ENCODE measurements at regions of chr10 and their contacts with region 1.

Region 1: GRCh38 chr10:117320050-117320665 is 55.1 kb downstream of the PDZD8 start:
- DNase-seq: peak; percentile 37
- H3K4me3 ChIP-seq: no peak overlapping the region
- H3K27ac ChIP-seq: no peak overlapping the region
- H3K4me1 ChIP-seq: no peaks in the 10 kb centered on the region
- H3K27me3 ChIP-seq: no peaks in the 10 kb centered on the region
- CTCF ChIP-seq: peak; percentile 32 to 39
- POLR2A ChIP-seq: no peak

Region 2: DNA sequence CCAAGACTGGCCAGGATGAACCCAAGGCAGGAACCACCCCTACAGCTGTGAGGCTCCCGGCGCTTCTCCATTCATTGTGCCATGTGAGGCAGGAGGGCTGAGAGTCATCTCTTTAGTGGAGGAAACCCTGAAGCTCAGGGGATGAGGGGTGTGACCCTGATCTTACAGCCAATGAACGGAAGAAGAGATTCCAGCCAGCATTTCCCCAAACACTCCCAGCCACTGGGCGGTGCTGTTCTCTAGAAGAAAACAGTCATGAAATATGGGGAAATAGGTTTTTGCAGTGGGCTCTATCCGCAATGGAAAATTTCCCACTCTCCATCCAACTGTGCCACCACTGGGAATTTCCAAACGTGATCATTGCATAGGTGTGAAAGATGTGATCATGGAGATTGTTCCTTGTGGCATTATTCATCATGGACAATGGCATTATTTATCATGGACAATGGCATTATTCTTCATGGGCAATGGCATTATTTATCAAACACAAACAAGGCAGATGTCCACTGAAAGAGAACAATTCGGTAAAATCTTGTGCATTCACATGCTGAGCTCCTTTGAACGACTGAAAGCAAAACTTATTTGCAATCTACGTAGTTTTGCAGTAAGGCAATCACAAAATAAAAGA is 93.2 kb before region 1 on chr10:
- CTCF ChIA-PET with region 1: interaction called, 17 read pairs
- POLR2A ChIA-PET with region 1: no interaction called
- dilution Hi-C with region 1: no loop called
- intact Hi-C with region 1: no loop called
- DNase-seq: peak; percentile 18
- H3K4me3 ChIP-seq: no peak overlapping the region
- H3K27ac ChIP-seq: no peak overlapping the region
- H3K4me1 ChIP-seq: no peaks in the 10 kb centered on the region
- H3K27me3 ChIP-seq: no peaks in the 10 kb centered on the region
- CTCF ChIP-seq: peak; percentile 34 to 41
- POLR2A ChIP-seq: no peak

Region 3: GRCh38 chr10:117334066-117334465 is 13.9 kb after region 1 on chr10:
- CTCF ChIA-PET with region 1: interaction called, 13 read pairs
- POLR2A ChIA-PET with region 1: no interaction called
- dilution Hi-C with region 1: no loop called
- intact Hi-C with region 1: no loop called
- DNase-seq: no peak
- H3K4me3 ChIP-seq: no peak overlapping the region
- H3K27ac ChIP-seq: no peak overlapping the region
- H3K4me1 ChIP-seq: no peaks in the 10 kb centered on the region
- H3K27me3 ChIP-seq: no peaks in the 10 kb centered on the region
- CTCF ChIP-seq: no peak
- POLR2A ChIP-seq: no peak

Region 4: GRCh38 chr10:117342641-117343040 is 22.5 kb after region 1 on chr10:
- CTCF ChIA-PET with region 1: interaction called, 13 read pairs
- POLR2A ChIA-PET with region 1: interaction called, 6 read pairs
- dilution Hi-C with region 1: no loop called
- intact Hi-C with region 1: no loop called
- DNase-seq: no peak
- H3K4me3 ChIP-seq: no peak overlapping the region
- H3K27ac ChIP-seq: no peak overlapping the region
- H3K4me1 ChIP-seq: no peaks in the 10 kb centered on the region
- H3K27me3 ChIP-seq: no peaks in the 10 kb centered on the region
- CTCF ChIP-seq: no peak
- POLR2A ChIP-seq: no peak

Region 5: DNA sequence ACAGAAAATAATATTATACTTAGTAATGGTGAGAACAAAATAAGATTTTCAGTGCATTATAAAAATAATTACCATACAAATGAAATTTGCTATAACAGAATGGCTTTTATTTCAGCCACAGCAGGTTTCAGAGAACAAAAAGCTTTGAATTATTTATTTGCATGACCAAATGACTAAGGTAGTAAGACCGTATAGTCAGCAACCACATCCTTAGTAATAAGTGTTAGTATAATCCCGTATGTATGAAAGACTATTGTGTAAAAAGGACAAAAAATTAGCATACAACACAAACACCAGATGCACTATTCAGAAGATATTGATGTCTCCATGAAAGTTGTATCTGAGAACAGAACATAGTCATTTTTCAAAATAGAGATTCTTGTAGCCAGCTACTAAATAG is 42.9 kb after region 1 on chr10:
- CTCF ChIA-PET with region 1: interaction called, 15 read pairs
- POLR2A ChIA-PET with region 1: no interaction called
- dilution Hi-C with region 1: no loop called
- intact Hi-C with region 1: no loop called
- DNase-seq: no peak
- H3K4me3 ChIP-seq: no peak overlapping the region
- H3K27ac ChIP-seq: no peak overlapping the region
- H3K4me1 ChIP-seq: peaks cover 37% of the 10 kb centered on the region
- H3K27me3 ChIP-seq: no peaks in the 10 kb centered on the region
- CTCF ChIP-seq: no peak
- POLR2A ChIP-seq: no peak

Region 6: DNA sequence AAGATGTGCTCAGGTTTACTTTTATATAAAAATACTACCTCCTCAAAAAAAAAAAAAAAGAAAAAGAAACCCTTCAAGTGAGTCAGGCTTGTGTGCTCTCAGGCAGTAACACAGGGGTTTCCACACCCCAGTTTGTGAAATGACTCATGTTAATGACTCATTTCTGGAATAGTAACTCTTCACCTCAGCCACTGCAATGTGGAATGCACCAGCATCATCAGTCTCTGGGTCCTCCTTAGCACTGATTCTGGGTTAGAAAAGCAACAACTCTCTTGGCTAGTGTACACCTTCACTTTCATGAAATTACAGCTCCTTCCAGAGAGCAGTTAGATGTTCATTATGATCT is 333.0 kb after region 1 on chr10:
- CTCF ChIA-PET with region 1: no interaction called
- POLR2A ChIA-PET with region 1: no interaction called
- dilution Hi-C with region 1: no loop called
- intact Hi-C with region 1: no loop called
- DNase-seq: peak; percentile 18
- H3K4me3 ChIP-seq: no peak overlapping the region
- H3K27ac ChIP-seq: no peak overlapping the region
- H3K4me1 ChIP-seq: no peaks in the 10 kb centered on the region
- H3K27me3 ChIP-seq: no peaks in the 10 kb centered on the region
- CTCF ChIP-seq: no peak
- POLR2A ChIP-seq: no peak

Measured in endothelial cell of umbilical vein (primary cell).